ENCODE measurements at regions of chr2 and their contacts with region 1.

Region 1: DNA sequence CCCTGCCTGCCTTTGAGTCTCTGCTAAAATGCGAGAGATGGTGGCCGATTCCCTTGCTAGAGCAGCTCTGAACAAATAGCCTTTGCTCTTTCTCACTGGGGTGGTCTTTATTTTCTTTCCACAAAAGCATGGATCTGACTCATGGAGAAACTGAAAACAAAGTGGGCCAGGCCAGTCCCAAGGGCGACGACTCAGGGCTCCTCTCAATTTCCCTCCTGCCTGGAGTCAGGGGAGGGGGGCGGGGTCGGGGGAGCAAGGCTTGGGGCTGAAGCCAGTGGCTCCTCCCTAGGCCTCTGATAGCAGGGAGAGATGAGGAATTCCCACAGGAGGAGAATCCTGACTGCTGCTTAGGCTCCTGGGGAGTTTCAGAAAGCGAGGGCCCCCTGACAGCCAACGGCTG is 17.1 kb upstream of the IL1R2 start:
- DNase-seq: no peak
- ATAC-seq: no peak
- H3K4me3 ChIP-seq: no peak overlapping the region
- H3K27ac ChIP-seq: no peak overlapping the region
- H3K4me1 ChIP-seq: no peaks in the 10 kb centered on the region
- H3K27me3 ChIP-seq: no peaks in the 10 kb centered on the region
- CTCF ChIP-seq: no peak
- EP300 ChIP-seq: no peak
- POLR2A ChIP-seq: no peak
- RAD21 ChIP-seq: no peak

Region 2: GRCh38 chr2:101806123-101806522 is 168.5 kb before region 1 on chr2:
- CTCF ChIA-PET with region 1: no interaction called
- POLR2A ChIA-PET with region 1: no interaction called
- RAD21 ChIA-PET with region 1: no interaction called
- SMC1A ChIA-PET with region 1: no interaction called
- in situ Hi-C with region 1: no loop called
- intact Hi-C with region 1: no loop called
- DNase-seq: no peak
- ATAC-seq: peak; percentile 75
- H3K4me3 ChIP-seq: no peak overlapping the region
- H3K27ac ChIP-seq: no peak overlapping the region
- H3K4me1 ChIP-seq: 0 out of 2 replicates have a peak, but pooled peaks cover 2% of the 10 kb centered on the region
- H3K27me3 ChIP-seq: no peaks in the 10 kb centered on the region
- CTCF ChIP-seq: no peak
- EP300 ChIP-seq: no peak
- POLR2A ChIP-seq: no peak
- RAD21 ChIP-seq: no peak

Region 3: DNA sequence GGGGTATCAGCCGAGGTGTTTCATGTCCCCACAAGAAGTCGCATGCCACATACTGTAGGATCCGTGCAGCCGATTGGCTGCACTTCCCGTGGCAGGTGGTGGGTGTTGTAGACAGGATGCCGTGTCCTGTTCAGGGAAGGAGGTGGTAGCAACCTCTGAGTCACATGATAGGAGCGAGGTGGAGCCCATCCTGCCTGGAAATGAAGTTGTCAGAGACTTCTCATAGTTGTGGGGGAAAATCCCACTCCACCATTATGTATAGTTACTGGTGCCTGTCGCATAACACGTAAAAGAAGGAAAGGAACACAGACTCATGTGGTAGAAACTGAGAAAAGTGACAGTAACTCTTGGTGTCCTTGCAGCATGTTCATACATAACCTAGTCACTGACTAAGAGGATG is 74.3 kb before region 1 on chr2:
- CTCF ChIA-PET with region 1: no interaction called
- POLR2A ChIA-PET with region 1: no interaction called
- RAD21 ChIA-PET with region 1: no interaction called
- SMC1A ChIA-PET with region 1: no interaction called
- in situ Hi-C with region 1: no loop called
- intact Hi-C with region 1: loop called (anchors 5 kb)
- DNase-seq: peak; percentile 71
- ATAC-seq: peak; percentile 97
- H3K4me3 ChIP-seq: no peak overlapping the region; the same call in 1 of the 2 replicates
- H3K27ac ChIP-seq: no peak overlapping the region
- H3K4me1 ChIP-seq: peaks cover 5% of the 10 kb centered on the region
- H3K27me3 ChIP-seq: no peaks in the 10 kb centered on the region
- CTCF ChIP-seq: no peak
- EP300 ChIP-seq: peak; percentile 63 to 89; a peak in 3 of 4 replicates
- POLR2A ChIP-seq: no peak
- RAD21 ChIP-seq: no peak